AG04449 (cell line): ENCODE measurements at regions of chr12 and their contacts with region 1.

Region 1: DNA sequence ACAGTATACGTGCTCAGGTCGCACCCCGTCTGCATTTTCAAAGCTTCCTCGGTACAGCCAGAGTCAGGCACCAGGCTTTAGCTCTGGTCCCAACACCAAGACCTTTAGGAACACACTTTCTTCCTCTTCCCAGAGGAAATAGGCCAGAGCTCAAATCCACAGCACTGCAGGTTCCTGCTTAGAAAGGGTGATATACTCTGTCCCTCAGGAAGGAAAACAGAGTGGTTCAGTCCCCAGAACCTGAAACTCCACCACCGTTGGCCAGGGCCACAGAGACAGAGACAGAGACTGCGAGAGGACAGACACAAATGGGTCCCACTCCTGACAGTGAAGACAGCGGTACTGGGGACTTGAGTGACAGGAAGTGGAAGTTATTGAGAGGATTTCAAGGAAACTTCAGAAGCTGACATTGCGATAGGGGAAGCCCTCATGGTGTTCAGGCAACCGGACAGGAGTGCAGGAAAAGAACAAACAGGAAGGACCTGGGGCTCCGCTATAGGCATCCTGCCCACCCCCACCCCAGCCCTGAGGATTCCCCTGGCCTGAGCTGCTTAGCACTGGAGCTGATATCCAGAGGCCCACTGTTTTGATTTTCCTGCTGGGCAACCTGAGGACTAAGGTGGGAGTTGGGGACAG is 5.5 kb upstream of the KRT8 start:
- DNase-seq: no peak
- H3K4me3 ChIP-seq: no peak overlapping the region
- CTCF ChIP-seq: no peak

Region 2: DNA sequence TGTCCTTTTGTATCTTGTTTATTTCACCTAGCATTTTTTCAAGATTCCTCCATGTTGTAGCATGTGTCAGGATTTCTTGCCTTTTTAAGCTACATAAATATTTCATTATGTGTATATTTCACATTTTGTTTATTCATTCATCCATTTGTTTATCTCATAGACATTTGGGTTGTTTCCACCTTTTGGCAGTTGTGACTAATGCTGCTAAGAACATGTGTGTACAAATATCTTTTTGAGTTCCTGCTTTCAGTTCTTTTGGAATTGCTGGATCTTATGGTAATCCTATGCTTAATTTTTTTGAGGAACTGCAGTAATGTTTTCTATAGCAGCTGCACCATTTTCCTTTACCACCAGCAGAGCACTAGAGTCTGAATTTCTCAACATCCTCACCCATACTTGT is 1256.9 kb before region 1 on chr12:
- CTCF ChIA-PET with region 1: no interaction called
- POLR2A ChIA-PET with region 1: no interaction called
- DNase-seq: no peak
- H3K4me3 ChIP-seq: no peak overlapping the region
- CTCF ChIP-seq: no peak

Region 3: DNA sequence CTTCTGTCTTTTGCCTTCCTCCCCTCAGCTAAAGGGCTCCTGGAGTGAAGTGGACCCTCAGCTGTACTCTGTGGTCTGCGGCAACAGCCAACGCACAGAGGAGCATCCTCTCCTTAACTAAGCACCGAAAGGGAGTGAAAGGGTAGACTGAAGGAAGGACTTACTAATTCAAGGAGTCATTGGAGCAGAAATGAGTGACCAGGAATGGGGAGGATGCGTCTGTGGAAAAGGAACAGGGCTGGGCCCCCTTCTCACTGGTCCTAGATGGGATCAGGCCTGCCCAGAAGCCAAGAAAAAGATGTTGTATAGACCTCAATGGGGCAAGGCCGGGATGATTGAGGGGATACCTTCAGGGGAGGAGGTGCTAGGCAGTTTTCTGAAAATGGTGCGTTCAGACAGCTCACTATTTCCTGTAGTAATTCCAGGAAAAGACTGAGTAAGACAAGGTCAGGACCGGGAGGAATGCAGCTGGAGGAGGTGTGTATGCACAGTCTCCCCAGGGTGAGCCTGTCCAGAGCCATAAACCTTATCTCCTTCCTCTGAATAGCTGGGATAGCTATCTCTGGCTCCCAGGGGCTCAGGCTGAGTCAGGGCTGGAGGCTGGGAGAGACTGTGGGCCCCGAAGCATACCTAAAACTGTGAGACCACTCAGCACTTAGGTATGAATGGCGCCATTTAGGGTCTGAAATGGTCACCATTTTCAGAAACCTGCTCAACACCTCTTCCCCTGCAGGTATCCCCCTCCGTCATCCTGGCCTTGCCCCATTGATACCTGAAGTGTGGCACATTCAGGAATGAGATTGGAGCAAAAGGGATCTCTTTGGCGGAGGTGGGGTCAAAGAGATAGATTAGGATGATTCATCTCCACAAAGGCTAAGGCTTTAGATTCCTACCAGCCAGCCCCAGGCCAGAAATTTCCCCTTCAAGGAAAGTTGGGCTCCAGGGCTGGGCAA is 14.7 kb after region 1 on chr12:
- CTCF ChIA-PET with region 1: interaction called, 10 read pairs
- POLR2A ChIA-PET with region 1: interaction called, 5 read pairs
- DNase-seq: peak; percentile 86
- H3K4me3 ChIP-seq: no peak overlapping the region
- CTCF ChIP-seq: no peak